ENCODE measurements at regions of chr19 and their contacts with region 1.

Region 1: DNA sequence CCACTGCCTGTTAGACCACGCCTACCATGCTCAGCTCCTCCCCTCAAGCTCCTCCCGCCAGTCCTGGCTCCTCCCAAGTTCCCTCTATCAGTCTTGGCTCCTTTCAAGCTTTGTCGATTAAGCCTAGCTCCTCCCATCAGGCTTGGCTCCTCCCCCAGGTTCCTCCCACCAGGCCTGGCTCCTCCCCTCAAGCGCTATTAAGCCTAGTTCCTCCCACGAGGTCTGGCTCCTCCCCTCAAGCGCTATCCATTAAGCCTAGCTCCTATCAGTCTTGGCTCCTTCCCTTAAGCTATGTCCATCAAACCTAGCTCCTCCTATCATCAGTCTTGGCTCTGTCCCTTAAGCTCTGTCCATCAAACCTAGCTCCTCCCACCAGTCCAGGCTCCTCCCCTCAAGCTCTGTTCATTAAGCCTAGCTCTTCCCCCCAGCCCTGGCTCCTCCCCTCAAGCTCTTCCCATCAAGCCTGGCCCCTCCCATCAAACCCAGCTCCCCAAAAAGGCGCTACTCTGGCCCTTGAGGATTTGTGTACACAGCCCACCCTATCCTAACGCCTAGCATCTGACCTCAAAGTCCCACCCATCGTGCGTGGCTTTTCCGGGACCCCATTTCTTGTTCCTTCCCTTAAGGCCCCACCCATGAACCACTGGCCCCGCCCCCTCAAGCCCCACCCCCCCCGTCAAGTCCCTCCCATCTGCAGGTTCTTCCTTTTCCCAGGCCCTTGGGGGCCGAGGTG is 10.0 kb downstream of the CAMSAP3 start:
- DNase-seq: peak; percentile 12
- ATAC-seq: peak; percentile 78
- H3K4me3 ChIP-seq: no peak overlapping the region
- H3K27ac ChIP-seq: no peak overlapping the region
- H3K4me1 ChIP-seq: no peaks in the 10 kb centered on the region
- H3K27me3 ChIP-seq: no peaks in the 10 kb centered on the region
- CTCF ChIP-seq: no peak

Region 2: GRCh38 chr19:7595466-7596133 is 10.1 kb before region 1 on chr19 and contains the start of gene CAMSAP3:
- CTCF ChIA-PET with region 1: interaction called, 13 read pairs
- POLR2A ChIA-PET with region 1: no interaction called
- in situ Hi-C with region 1: no loop called
- intact Hi-C with region 1: no loop called
- DNase-seq: no peak
- ATAC-seq: peak; percentile 91
- H3K4me3 ChIP-seq: peak within 1 kb of the TSS; percentile 34 to 35
- H3K27ac ChIP-seq: no peak within 1 kb of the TSS
- H3K4me1 ChIP-seq: no peaks in the 10 kb centered on the region
- H3K27me3 ChIP-seq: no peaks in the 10 kb centered on the region
- CTCF ChIP-seq: no peak
- total RNA-seq, gene CAMSAP3: 1.7 TPM

Region 3: DNA sequence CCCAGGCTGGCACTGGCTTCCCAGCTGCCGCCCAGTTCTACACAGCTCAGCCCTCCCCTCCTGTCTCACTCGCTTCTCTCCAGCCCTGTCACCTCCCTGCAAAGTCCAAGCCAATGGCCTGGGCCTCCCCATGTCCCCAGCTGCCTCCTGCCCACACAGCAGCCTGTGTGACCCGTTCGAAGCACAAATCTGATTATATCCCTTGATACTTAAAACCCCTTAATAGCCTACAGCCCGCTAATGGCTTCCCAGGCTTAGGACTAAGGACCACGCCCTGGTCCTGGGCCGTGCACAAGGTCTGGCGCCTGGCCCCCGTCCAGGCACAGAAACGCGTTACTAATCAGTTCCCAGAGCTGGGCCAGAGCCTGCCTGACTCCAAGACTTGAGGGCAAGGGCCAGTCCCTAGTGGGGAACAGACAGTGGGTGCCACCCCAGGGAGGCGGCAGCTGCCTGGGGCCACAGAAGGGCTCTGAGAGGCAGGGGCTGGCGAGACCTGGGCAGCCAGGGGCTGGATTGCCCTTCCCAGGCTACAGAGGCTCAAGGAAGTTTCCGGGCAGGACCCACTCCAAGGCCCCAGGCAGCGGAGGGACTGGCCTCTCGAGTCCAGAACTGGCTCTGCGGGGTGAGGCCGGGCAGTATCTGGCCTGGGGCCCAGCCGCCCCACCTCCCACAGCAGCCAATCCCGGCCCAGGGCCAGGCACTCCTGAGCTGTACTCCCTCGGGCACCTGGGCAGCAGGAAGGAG is 13.3 kb after region 1 on chr19:
- CTCF ChIA-PET with region 1: no interaction called
- POLR2A ChIA-PET with region 1: no interaction called
- in situ Hi-C with region 1: no loop called
- intact Hi-C with region 1: no loop called
- DNase-seq: no peak
- ATAC-seq: peak; percentile 30; the same call in 1 of the 2 replicates
- H3K4me3 ChIP-seq: no peak overlapping the region
- H3K27ac ChIP-seq: no peak overlapping the region
- H3K4me1 ChIP-seq: no peaks in the 10 kb centered on the region
- H3K27me3 ChIP-seq: no peaks in the 10 kb centered on the region
- CTCF ChIP-seq: no peak